Activated CD8-positive, alpha-beta memory T cell treated with anti-CD3 and anti-CD28 coated beads, Interleukin-2, amount 10 ng/mL, durations not matched to agents 7 days and 5 days (primary cell): ENCODE measurements at regions of chr22 and their contacts with region 1.

Region 1: DNA sequence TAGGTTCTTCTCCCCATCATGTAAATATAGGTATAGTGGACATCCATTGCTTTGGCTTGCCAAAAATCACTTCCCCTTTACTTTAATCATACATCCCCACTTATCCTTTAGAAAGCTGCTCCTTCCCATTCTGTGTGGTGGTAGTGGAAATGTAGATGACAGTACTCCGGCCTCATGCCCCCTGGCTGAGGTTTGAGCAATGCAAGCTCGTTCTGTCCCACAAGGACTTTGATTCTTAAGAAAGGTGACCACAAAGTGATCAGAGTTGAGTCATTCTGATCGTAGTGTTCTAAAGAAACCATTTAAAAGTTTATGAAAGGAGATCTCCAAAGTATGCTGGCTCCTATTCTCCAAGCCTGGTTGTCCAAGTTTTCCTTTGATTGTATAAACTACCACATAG is 10.9 kb downstream of the TUG1 start:
- DNase-seq: no peak
- ATAC-seq: no peak
- H3K4me3 Mint-ChIP-seq: no peak overlapping the region
- H3K27ac Mint-ChIP-seq: no peak overlapping the region
- H3K4me1 Mint-ChIP-seq: peaks cover 24% of the 10 kb centered on the region
- H3K27me3 Mint-ChIP-seq: no peaks in the 10 kb centered on the region

Region 2: DNA sequence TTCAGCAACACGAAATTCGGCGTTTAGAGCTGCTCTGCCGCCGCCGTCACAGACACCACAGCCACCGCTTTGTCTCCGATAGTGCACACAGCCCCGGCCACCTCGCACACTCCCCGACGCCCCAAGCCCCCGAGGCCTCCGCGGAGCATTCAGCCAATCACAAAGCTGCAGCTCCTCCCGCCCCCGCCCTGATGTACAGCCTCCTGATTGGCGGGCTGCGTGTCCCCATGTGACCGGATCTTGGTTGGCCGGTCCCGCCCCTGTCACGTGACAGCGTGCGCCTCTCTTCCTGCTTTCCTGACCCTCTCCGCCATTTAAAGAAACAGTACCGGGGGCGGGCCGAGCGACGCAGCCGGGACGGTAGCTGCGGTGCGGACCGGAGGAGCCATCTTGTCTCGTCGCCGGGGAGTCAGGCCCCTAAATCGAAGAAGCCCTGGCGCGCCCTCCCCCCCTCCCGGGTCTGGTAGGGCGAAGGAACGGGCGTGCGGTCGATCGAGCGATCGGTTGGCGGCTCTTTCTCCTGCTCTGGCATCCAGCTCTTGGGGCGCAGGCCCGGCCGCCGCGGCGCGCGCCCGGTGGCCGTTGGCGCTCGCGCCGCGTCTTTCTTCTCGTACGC is 10.9 kb before region 1 on chr22 and contains the start of gene TUG1:
- CTCF ChIA-PET with region 1: interaction called, 16 read pairs
- DNase-seq: peak; percentile 99
- ATAC-seq: peak; percentile 95
- H3K4me3 Mint-ChIP-seq: peak within 1 kb of the TSS; percentile 91
- H3K27ac Mint-ChIP-seq: peak within 1 kb of the TSS; percentile 97
- H3K4me1 Mint-ChIP-seq: peaks cover 52% of the 10 kb centered on the region
- H3K27me3 Mint-ChIP-seq: no peaks in the 10 kb centered on the region
- total RNA-seq, gene TUG1: 56.7 to 69.8 TPM

Region 3: GRCh38 chr22:31029276-31029675 is 49.3 kb after region 1 on chr22:
- CTCF ChIA-PET with region 1: no interaction called
- DNase-seq: no peak
- ATAC-seq: no peak
- H3K4me3 Mint-ChIP-seq: no peak overlapping the region
- H3K27ac Mint-ChIP-seq: no peak overlapping the region
- H3K4me1 Mint-ChIP-seq: no peaks in the 10 kb centered on the region
- H3K27me3 Mint-ChIP-seq: no peaks in the 10 kb centered on the region